ENCODE measurements at regions of chr2 and their contacts with region 1.

Region 1: DNA sequence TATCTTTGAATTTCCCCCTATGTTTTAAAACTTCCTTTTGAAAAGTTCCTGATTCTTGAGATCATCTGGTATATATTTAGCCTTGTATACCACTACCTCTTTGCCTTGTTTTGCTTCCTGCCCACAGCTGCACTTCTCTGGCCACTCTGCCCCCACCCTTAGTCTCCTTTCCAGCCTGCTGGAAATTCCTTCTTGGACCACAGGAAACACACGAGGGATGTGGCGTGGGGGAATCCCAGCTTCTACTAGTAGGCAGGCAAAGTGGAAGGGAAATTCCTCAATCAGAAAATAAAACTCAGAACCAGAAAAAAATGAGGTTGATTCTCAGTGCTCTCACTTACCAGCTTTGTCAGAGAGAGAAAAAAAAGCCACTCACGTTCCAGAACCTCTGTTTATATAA is 13.4 kb downstream of the IL18RAP start:
- DNase-seq: no peak
- CTCF ChIP-seq: no peak

Region 2: GRCh38 chr2:102126651-102127050 is 309.7 kb before region 1 on chr2:
- CTCF ChIA-PET with region 1: no interaction called
- POLR2A ChIA-PET with region 1: no interaction called
- DNase-seq: no peak
- CTCF ChIP-seq: no peak

Region 3: DNA sequence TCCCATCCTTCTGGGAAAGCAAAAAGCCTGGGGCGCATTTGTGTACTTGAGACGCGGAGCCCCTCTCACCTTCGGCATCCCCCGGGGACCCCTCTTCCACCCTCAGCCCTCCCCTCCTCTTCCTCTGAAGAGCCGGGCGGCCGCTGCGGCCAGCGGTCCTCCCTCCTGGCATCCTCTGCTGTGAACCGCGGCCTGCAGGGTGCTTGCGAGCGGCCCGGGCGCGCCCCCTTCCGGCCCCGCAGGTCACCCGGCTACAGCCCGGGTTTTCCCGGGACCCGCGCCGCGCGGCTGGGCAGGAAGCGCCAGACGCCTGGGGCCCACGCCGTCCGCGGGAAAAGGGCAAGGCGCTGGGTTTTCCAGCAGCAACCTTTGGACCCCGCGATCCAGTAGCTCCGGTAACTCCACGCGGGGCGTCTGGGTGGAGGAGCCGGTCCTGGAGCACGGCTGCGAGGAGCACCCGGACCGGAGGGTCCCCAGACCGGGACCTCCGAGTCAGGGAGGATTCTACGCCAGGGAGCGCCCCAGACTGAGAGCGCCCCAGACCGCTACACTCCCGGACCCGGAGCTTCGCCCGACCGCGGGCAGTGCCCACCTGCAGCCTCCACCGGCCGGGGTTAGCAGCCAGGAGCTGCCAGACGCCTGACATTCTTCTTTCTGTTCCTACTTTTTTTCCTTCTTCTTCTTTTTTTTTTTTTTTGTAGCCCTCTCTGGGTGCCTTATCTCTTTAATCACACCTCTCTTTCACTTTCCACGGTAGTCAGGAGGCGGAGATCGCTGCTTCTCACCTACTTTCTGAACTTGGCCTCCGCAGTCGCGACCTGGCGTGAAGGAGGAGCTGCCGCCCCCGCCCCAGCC is 80.6 kb before region 1 on chr2 and contains the start of gene IL18R1:
- CTCF ChIA-PET with region 1: interaction called, 13 read pairs
- POLR2A ChIA-PET with region 1: no interaction called
- DNase-seq: peak; percentile 81
- CTCF ChIP-seq: peak; percentile 86

Region 4: DNA sequence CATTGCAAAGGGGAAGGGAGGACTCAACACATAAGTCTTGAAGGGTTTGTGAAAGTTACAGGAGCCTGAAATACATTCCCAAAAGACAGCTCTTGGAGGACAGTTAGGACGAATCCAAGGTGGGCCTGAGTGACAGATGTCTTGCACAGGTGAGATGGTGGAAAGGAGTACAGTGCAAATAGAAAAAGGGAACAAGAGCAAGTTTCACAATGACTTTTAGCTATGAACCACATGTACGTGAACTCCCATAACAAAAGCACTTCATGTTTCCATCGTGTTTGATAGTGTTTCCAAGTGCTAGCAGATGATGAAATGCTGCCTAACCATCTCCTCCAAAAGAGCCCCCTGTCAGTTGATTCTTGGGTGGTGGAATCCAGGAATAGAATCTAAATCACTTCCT is 11.6 kb before region 1 on chr2:
- CTCF ChIA-PET with region 1: interaction called, 49 read pairs
- POLR2A ChIA-PET with region 1: no interaction called
- DNase-seq: no peak
- CTCF ChIP-seq: no peak

Region 5: GRCh38 chr2:102460467-102460866 is 24.1 kb after region 1 on chr2:
- CTCF ChIA-PET with region 1: no interaction called
- POLR2A ChIA-PET with region 1: no interaction called
- DNase-seq: no peak
- CTCF ChIP-seq: no peak

Measured in GM10248 (cell line).